ENCODE measurements at regions of chr16 and their contacts with region 1.

Region 1: GRCh38 chr16:68264128-68265077 is at the start of gene SLC7A6:
- DNase-seq: peak; percentile 91
- total RNA-seq, gene SLC7A6: 42.4 TPM

Region 2: GRCh38 chr16:68237243-68238028 is 27.0 kb before region 1 on chr16:
- intact Hi-C with region 1: loop called (anchors 2 kb)
- DNase-seq: peak; percentile 98

Region 3: GRCh38 chr16:68244903-68245853 is 19.2 kb before region 1 on chr16 and contains the start of gene PLA2G15:
- intact Hi-C with region 1: loop called (anchors 2 kb)
- DNase-seq: peak; percentile 98
- total RNA-seq, gene PLA2G15: 46.7 TPM

Region 4: DNA sequence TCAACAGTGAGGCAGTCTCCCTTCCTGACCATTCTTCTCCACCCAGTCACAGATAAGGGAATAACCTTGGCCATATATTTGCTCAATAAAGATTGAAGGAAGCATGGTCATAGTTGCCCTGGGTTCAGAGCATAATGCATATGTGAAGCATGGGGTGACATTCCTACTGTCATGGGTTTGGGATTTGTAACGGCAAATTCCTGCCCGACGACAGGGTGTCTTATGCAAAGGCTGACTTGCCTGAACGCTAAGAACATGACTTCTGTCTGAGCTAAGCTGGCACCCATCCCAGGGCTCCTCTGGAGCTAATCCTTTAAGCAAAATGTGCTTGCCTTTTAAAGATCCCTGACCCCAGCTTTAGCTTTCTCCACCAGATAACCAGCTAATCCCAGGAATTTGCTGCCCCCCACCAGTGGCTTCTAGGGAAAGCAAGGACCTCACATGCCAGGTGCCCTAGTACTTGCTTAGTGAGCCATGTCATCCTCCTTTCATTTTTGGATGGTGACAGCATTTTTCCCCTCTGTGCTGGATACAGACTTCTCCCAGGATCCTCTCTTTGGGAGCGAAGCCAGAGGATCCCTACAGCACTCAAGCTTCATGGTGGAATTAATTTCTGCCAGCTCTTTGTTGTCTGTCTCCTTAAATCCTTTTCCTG is 34.6 kb after region 1 on chr16:
- intact Hi-C with region 1: loop called (anchors 5 kb)
- DNase-seq: peak; percentile 74

Region 5: GRCh38 chr16:68310761-68311511 is 46.5 kb after region 1 on chr16 and contains the starts of genes PRMT7 and SLC7A6OS:
- intact Hi-C with region 1: loop called (anchors 1 kb)
- DNase-seq: peak; percentile 97
- total RNA-seq, gene PRMT7: 24.2 TPM
- total RNA-seq, gene SLC7A6OS: 14.5 TPM

Region 6: DNA sequence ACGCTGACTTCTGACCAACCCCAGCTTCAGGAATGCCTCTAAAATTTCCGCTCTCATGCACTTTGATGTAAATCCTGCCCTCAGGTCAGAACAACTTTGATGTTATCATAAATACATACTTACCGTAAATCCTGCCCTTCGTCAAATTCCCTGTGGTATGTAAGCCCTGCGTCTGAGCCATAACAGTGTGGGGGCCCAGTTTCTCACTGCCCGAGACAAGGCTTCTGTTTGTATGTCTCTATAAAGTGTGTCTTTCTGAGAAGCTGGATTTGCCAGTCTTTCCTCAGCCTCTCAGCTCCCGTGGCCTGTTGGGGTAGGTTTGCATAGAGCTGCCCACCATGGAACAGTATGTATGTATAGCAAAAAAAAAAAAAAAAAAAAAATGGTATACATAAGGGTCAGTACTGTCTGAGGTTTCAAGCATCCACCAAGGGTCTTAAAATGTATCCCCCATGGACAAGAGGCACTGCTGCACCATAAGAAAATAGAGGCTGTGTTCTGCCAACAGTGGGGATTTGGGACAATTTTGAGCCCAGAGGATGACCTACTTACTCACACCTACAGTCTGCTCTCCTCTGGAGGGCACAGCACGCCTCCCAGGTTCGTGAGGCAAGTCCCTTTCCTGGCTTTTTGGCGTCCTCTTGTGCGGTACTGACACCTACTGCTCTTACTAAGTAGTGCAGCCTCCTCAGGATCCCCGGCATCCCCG is 63.9 kb after region 1 on chr16:
- intact Hi-C with region 1: loop called (anchors 2 kb)
- DNase-seq: peak; percentile 91